Gastrocnemius medialis (tissue), 4 donors: ENCODE measurements at regions of chr3 and their contacts with region 1.

Region 1: DNA sequence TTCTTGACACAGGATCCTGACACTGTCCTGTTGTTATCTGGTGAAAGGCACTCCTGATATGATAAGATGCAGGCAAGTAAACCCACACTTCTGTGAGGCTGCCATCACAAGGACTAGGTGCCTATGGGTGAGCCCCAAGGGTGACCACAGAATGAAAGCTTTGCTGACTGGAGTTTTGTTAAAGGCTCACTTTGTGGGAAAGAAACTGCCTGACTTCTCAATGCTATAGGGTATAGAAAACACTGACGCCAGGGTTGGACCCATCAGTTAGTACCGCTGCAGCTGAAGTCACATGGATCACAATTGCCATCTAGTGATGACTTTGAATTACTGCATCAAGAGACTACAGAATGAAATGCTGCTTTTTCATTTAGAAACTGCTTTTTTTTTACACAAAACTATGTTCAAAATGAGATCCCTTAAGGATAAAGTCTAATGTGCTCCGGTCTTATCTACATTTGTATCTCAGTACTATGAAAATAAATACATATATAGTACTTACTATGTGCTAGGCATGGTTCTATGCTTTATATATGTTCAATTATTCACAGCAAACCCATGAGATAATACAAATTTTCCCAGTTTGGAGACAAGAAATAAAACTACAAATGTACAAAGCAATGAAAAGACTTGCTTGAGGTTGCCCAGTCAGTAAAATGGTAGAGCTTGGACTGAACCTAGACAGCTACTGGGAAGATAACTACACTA is 64.2 kb upstream of the CMSS1 start:
- DNase-seq: no peak
- ATAC-seq: peak in 1 of 2 donors; percentile 49
- H3K4me3 ChIP-seq: no peak overlapping the region
- H3K27ac ChIP-seq: no peak overlapping the region
- H3K4me1 ChIP-seq: peaks cover 7% of the 10 kb centered on the region in 2 donors
- H3K27me3 ChIP-seq: no peaks in the 10 kb centered on the region
- CTCF ChIP-seq: peak; percentile 38 to 63 (median 54)
- POLR2A ChIP-seq: no peak

Region 2: GRCh38 chr3:99023590-99024192 is 729.7 kb before region 1 on chr3:
- in situ Hi-C with region 1: loop called (anchors 10 to 25 kb)
- intact Hi-C with region 1: loop called (anchors 5 kb)
- DNase-seq: no peak
- ATAC-seq: no peak
- H3K4me3 ChIP-seq: no peak overlapping the region
- H3K27ac ChIP-seq: no peak overlapping the region
- H3K4me1 ChIP-seq: no peaks in the 10 kb centered on the region
- H3K27me3 ChIP-seq: no peaks in the 10 kb centered on the region
- CTCF ChIP-seq: peak in 4 of 5 experiments; percentile 15 to 51 (median 44)
- POLR2A ChIP-seq: no peak

Region 3: DNA sequence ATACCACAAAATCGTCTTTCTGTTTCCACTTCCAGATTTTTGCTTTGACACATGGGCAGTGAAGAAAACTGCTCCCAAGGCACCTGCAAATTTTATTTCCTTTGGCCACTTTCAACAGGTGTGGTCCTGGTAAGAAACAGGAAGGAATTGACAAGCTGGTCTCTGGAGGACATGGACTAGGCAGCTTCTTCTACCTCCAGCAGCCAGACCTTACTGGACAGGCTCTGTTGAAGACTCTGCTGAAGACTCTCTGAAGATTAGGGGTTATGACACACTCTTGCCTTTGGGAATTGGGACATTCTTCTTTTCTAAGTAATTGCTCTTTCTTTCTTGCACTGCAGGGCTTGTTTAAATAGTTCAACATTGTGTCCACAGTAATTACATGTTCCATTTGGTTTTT is 704.3 kb before region 1 on chr3:
- in situ Hi-C with region 1: loop called in 1 of 4 experiments (anchors 25 kb)
- intact Hi-C with region 1: no loop called
- DNase-seq: no peak
- ATAC-seq: no peak
- H3K4me3 ChIP-seq: no peak overlapping the region
- H3K27ac ChIP-seq: no peak overlapping the region
- H3K4me1 ChIP-seq: no peaks in the 10 kb centered on the region
- H3K27me3 ChIP-seq: no peaks in the 10 kb centered on the region
- CTCF ChIP-seq: no peak
- POLR2A ChIP-seq: no peak

Region 4: DNA sequence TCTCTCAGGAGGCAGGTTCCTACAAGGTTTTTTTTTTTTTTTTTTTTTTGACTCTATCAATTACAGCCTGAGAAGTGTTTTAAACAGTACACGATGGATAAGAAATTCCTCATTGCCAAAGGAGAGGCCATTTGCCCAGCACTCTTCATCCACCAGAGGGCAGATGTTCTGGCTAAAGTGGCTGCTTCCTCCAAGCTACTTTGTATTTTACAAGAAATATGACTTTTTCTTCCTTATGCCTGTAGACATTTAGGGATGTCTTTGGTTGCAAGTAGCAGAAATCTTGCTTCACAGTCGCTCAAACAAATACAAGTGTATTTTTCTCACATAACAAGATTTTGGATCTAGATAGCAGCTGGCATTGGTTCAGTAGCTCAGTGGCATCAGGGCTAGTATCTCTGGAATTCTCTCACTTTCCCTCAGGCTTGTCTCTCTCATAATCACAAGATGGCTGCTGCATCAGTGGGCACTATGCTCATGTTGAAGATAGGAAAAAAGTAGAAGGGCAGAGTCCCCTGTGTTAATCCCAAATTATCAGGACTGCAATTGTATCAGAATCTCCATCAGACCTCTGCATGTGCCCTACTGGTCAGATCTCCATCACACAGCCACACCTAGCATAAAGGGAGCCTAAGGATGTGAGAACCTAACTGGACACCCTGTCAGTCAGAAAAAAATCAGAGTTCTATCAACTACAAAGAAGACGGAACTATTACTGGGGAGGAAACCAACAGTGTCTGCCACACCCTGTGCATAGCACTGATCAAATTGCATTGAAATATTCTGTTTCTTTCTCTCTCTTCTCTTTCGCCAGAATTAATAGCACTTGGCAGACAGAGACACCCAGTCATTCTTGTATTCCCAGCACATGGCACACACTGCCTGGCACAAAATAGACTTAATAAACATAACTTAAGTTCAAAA is 253.9 kb before region 1 on chr3:
- in situ Hi-C with region 1: loop called in 1 of 4 experiments (anchors 10 kb)
- intact Hi-C with region 1: no loop called
- DNase-seq: no peak
- ATAC-seq: peak in 1 of 2 donors; percentile 54
- H3K4me3 ChIP-seq: no peak overlapping the region
- H3K27ac ChIP-seq: no peak overlapping the region
- H3K4me1 ChIP-seq: peaks cover 0 to 4% of the 10 kb centered on the region in 2 donors
- H3K27me3 ChIP-seq: no peaks in the 10 kb centered on the region
- CTCF ChIP-seq: peak; percentile 7 to 58 (median 34)
- POLR2A ChIP-seq: no peak

Region 5: GRCh38 chr3:99645277-99646106 is 107.9 kb before region 1 on chr3:
- in situ Hi-C with region 1: no loop called
- intact Hi-C with region 1: loop called (anchors 1 kb)
- DNase-seq: no peak
- ATAC-seq: peak; percentile 27 to 34
- H3K4me3 ChIP-seq: no peak overlapping the region
- H3K27ac ChIP-seq: peak overlapping the region; percentile 24 to 44 (median 36)
- H3K4me1 ChIP-seq: no peaks in the 10 kb centered on the region
- H3K27me3 ChIP-seq: no peaks in the 10 kb centered on the region
- CTCF ChIP-seq: peak; percentile 30 to 71 (median 52)
- POLR2A ChIP-seq: no peak